ENCODE measurements at regions of chr16 and their contacts with region 1.

Region 1: DNA sequence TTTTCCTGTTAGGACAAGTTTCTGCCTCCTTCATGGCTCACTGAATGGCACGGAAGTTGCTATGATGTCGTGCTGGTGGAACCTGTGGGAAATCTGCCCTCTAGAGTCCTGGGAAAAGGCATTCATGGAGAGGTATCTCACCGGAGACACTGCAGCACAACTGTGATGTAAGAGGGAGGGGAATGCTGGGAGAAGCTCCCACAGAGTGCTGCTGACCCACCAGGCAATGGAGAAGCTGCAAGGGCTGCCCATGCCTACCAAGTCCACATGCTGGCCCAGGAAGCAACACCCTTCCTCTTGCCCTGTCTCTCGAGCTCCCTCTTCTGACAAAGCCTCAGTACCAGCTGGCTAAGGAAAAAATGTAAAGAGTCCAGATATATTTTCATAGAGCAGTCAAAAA is 45.2 kb upstream of the SLC5A11 start:
- DNase-seq: no peak
- ATAC-seq: peak in 1 of 2 donors; percentile 22
- H3K4me3 ChIP-seq: no peak overlapping the region
- H3K27ac ChIP-seq: no peak overlapping the region
- H3K4me1 ChIP-seq: no peaks in the 10 kb centered on the region
- H3K27me3 ChIP-seq: no peaks in the 10 kb centered on the region

Region 2: DNA sequence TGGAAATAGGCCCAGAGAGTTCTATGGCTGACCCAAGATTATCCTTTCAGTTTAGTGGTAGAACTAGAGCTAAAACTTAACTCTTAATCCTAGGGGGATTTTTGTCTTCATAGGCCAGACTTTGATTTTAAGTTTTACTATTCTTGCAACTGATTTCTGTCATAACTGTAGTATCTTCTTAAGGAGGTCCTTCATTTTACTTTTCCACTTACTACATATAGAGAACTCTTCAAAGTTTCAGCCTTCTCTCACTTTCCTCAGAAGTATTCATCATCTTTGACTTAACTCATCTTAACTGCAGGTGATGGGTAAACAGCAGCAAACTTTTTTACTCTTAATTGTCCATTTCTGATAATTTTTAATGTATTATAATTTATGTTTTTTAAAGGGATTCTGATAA is 237.8 kb before region 1 on chr16:
- intact Hi-C with region 1: loop called in 3 of 4 experiments (anchors 5 to 10 kb)
- DNase-seq: no peak
- ATAC-seq: no peak
- H3K4me3 ChIP-seq: no peak overlapping the region
- H3K27ac ChIP-seq: no peak overlapping the region
- H3K4me1 ChIP-seq: no peaks in the 10 kb centered on the region
- H3K27me3 ChIP-seq: no peaks in the 10 kb centered on the region

Region 3: GRCh38 chr16:24568392-24568791 is 232.2 kb before region 1 on chr16:
- intact Hi-C with region 1: loop called (anchors 5 to 10 kb)
- DNase-seq: no peak
- ATAC-seq: no peak
- H3K4me3 ChIP-seq: no peak overlapping the region
- H3K27ac ChIP-seq: no peak overlapping the region
- H3K4me1 ChIP-seq: no peaks in the 10 kb centered on the region
- H3K27me3 ChIP-seq: no peaks in the 10 kb centered on the region

Region 4: DNA sequence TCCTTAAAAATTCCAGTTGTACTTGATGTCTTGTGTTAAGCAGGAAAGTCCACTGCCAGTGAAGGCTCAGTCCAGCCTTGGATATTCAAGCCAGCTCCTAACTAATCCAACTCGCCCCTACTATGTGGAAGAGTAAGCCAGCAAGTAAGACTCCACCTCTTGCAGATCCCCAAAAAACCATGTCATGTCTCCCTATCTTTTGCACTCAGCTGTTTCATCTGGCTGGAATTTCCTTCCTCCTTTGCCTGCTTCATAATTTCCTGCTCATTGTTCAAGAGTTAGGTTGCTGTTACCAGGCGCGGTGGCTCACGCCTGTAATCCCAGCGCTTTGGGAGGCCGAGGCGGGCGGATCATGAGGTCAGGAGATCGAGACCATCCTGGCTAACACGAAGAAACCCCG is 223.4 kb before region 1 on chr16:
- intact Hi-C with region 1: loop called in 1 of 4 experiments (anchors 10 kb)
- DNase-seq: peak in 1 of 3 donors; percentile 14
- ATAC-seq: peak in 1 of 2 donors; percentile 71
- H3K4me3 ChIP-seq: no peak overlapping the region
- H3K27ac ChIP-seq: no peak overlapping the region
- H3K4me1 ChIP-seq: no peaks in the 10 kb centered on the region
- H3K27me3 ChIP-seq: no peaks in the 10 kb centered on the region

Region 5: DNA sequence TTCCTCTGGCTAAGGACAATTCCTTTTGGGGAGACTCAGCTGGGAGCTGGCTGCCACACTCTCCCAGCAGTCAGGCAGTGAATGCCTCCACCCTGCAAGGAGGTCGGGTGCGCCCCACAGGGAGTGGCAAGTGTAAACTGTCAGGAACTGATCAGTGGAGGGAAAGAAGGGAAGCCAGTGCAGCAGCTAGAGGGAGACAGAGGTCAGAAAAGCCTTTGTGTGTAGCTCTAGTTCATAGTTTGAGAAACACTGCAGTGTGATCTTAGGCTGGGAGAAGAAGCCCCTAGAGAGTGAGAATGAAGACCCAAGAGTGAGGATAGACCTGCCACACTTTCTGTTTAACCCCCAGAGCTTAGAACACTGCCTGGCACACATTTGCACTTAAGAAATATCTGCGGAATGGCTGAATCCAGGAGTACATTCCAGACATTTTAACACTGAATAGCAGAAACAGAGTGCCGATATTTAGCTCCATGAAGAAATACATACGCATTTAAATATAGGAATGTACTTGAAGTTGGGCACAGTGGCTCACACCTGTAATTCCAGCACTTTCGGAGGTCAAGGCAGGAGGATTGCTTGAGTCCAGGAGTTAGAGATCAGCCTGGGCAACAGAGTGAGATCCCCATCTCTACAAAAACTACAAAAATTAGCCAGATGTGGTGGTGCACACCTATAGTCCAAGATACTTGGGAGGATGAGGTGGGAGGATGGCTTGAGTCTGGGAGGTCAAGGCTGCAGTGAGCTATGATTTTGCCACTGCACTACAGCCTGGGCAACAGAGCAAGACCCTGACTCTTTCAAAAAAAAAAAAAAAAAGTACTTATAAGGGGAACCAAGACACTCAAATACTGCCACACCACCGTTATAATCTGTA is 34.1 kb after region 1 on chr16:
- intact Hi-C with region 1: no loop called
- DNase-seq: no peak
- ATAC-seq: peak; percentile 38 to 56
- H3K4me3 ChIP-seq: no peak overlapping the region
- H3K27ac ChIP-seq: no peak overlapping the region
- H3K4me1 ChIP-seq: peaks cover 2% of the 10 kb centered on the region
- H3K27me3 ChIP-seq: no peaks in the 10 kb centered on the region

Region 6: GRCh38 chr16:24906199-24907020 is 105.8 kb after region 1 on chr16:
- intact Hi-C with region 1: no loop called
- DNase-seq: no peak
- ATAC-seq: no peak
- H3K4me3 ChIP-seq: no peak overlapping the region
- H3K27ac ChIP-seq: no peak overlapping the region
- H3K4me1 ChIP-seq: no peaks in the 10 kb centered on the region
- H3K27me3 ChIP-seq: no peaks in the 10 kb centered on the region